ENCODE measurements at regions of chr7 and their contacts with region 1.

Region 1: GRCh38 chr7:38215735-38216670 is 38.0 kb downstream of the STARD3NL start:
- DNase-seq: peak; percentile 88
- H3K4me3 ChIP-seq: no peak overlapping the region
- H3K27ac ChIP-seq: no peak overlapping the region
- H3K27me3 ChIP-seq: no peaks in the 10 kb centered on the region
- CTCF ChIP-seq: peak; percentile 99

Region 2: GRCh38 chr7:37999673-38000072 is 216.3 kb before region 1 on chr7:
- CTCF ChIA-PET with region 1: no interaction called
- POLR2A ChIA-PET with region 1: no interaction called
- DNase-seq: no peak
- H3K4me3 ChIP-seq: no peak overlapping the region
- H3K27ac ChIP-seq: no peak overlapping the region
- H3K27me3 ChIP-seq: no peaks in the 10 kb centered on the region
- CTCF ChIP-seq: no peak

Region 3: DNA sequence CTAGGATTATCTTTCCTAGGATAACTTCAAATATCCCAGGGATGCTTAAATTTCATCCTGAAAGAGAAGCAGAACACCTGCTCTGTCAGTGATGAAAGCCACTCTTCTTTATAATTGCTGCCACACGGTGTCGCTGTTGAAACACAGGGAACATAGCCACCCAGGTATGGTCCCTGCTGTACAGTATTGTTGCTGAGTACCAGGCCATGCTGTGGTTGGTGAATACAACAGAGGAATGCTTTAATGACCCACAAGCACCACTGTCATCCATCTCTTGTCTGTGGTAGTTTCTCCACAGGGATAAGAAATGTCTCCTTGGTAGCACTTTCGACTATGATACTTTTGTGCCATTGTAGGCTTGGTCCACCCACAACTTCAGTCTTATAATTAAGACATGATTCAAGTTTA is 108.5 kb before region 1 on chr7:
- CTCF ChIA-PET with region 1: interaction called, 73 read pairs
- POLR2A ChIA-PET with region 1: no interaction called
- DNase-seq: peak; percentile 4
- H3K4me3 ChIP-seq: no peak overlapping the region
- H3K27ac ChIP-seq: no peak overlapping the region
- H3K27me3 ChIP-seq: no peaks in the 10 kb centered on the region
- CTCF ChIP-seq: peak; percentile 83

Region 4: DNA sequence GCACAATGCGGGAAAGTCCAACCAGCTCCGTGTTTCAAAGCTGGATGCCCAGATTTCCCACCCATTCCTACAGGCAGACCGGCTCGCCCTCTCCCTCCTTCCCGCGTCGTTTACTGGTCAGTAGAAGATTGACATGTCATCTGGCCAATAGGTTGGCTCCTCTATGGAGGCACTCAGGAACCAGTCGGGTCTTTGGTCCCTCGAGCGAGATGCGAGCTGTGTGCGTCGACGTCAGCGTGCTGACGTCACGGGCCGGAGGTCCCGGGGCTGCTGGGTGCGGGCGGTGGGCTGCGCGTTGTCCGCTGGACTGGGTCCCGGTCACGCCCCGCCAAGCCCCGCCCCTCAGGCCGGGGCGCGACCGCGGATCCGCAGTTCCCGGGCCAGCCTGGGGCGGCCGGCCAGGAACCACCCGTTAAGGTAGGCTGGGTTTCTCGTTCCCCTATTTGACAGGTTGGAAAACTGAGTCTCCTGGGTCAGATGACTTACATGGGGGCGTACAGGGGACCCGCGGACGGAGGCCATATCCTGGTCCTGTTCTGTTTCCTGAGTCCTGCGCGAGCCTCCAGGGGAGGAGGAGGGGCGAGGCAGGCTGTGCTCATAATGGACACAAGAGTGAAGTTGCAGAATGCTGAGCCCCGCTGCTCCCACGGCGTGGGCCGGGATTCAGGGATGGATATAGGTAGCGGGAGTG is 37.9 kb before region 1 on chr7 and contains the start of gene STARD3NL:
- CTCF ChIA-PET with region 1: interaction called, 66 read pairs
- POLR2A ChIA-PET with region 1: no interaction called
- DNase-seq: peak; percentile 100
- H3K4me3 ChIP-seq: peak within 1 kb of the TSS; percentile 84
- H3K27ac ChIP-seq: peak within 1 kb of the TSS; percentile 84
- H3K27me3 ChIP-seq: no peaks in the 10 kb centered on the region
- CTCF ChIP-seq: no peak
- polyA plus RNA-seq, gene STARD3NL: 63.8 and 93.4 TPM in 2 replicates

Region 5: DNA sequence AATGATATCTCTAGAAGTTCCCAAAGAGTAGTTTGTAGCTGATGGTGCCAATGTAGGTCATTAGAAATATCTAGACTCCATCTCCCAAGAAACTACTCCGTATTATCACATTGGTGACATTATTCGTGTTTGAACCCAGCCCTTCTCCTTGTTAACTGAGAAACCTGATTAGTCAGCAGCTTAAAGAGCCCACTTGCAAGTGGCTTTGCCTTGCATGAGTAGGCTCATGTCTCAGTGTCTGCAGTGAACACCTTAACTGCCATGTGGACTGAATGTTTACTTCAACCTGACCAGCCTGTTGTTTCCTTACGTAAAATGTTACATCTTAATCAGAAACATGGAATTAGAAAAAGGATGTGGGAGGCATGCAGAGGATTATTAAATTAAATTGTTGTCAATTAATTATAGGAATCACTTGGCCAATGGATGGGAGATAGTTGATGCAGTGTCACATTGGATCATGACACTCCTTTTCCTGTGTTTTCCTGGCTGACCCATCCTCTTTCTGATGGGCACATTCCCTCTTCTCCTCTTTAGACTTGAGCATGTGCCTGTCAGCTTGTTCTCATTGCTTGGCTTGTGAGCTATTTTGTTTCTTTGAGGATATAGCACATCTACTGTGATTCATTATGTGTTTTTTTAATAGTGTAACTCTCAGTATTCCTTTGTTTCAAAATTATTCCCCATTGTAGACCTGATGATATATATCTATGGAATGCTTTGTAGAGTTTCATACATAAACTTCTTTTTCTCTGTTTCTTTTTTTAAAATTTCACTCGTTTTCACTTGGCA is 20.0 kb before region 1 on chr7:
- CTCF ChIA-PET with region 1: interaction called, 143 read pairs
- POLR2A ChIA-PET with region 1: interaction called, 5 read pairs
- DNase-seq: no peak
- H3K4me3 ChIP-seq: no peak overlapping the region
- H3K27ac ChIP-seq: no peak overlapping the region
- H3K27me3 ChIP-seq: no peaks in the 10 kb centered on the region
- CTCF ChIP-seq: no peak

Region 6: GRCh38 chr7:38245409-38245977 is 29.5 kb after region 1 on chr7:
- CTCF ChIA-PET with region 1: no interaction called
- POLR2A ChIA-PET with region 1: no interaction called
- DNase-seq: no peak
- H3K4me3 ChIP-seq: no peak overlapping the region
- H3K27ac ChIP-seq: no peak overlapping the region
- H3K27me3 ChIP-seq: no peaks in the 10 kb centered on the region
- CTCF ChIP-seq: no peak

Region 7: DNA sequence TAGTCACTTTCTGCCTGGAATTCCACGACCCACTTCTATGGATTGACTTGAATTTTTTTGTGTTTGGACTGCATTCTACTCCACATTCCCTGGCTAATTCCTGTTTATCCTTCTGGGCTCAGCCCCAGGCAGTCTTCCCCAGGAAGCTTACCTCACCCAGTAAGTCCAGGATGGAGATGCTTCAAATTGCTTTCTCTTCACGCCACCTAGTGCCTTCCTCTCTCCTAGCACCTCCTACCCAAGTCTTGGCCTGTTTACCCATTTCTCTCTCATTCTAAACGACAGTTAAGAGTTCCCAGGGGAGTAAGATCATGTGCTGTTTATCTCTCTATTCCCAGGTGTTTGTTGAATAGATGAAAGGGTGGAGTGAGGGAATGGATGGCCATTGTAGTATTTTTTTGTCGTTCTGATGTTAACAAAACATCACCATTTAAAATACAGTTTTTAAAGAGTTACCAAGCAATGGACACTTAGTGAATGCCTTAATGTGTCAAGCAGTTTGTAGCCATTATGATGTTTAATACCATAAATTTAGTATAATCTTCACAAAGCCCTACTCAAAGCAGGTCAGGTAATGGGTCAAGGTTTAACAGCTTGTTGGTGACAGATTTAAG is 102.9 kb after region 1 on chr7:
- CTCF ChIA-PET with region 1: interaction called, 36 read pairs
- POLR2A ChIA-PET with region 1: no interaction called
- DNase-seq: peak; percentile 51
- H3K4me3 ChIP-seq: no peak overlapping the region
- H3K27ac ChIP-seq: no peak overlapping the region
- H3K27me3 ChIP-seq: no peaks in the 10 kb centered on the region
- CTCF ChIP-seq: peak; percentile 82

Region 8: DNA sequence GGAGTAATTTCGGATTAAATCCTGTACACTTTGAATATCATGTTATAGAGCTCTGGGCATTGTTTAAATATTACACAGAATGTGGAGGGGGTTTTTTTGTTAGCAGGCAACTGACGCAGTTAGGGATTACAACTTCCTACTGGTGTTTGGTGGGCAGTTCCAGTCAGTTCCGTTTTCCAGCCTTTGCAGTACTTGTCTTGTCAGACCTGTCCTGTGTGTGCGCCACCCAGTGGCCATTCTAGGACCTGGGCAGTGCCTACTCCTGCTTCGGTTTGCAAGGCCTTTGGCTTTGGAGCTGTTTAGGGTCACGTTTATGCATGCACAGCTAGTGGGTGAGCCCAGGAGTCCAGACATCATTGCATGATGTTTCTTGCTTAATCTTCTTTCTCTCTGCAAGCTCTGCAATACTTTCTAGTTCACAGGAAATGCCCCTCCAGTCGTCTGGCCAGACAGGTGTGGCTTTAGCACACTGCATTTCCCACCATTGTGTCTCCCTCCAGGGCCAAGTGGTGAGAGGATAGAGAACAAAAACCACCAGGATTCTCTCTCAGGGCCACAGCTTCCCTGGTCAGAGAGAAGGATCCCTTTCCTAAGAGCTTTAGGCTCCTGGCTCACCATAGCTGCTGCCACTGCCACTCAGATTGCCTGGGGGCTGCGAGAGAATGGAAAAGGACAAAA is 154.0 kb after region 1 on chr7:
- CTCF ChIA-PET with region 1: interaction called, 44 read pairs
- POLR2A ChIA-PET with region 1: interaction called, 3 read pairs
- DNase-seq: peak; percentile 67
- H3K4me3 ChIP-seq: no peak overlapping the region
- H3K27ac ChIP-seq: no peak overlapping the region
- H3K27me3 ChIP-seq: no peaks in the 10 kb centered on the region
- CTCF ChIP-seq: peak; percentile 87

Measured in AG04450 (cell line).